GM10248 (cell line): ENCODE measurements at regions of chr5 and their contacts with region 1.

Region 1: DNA sequence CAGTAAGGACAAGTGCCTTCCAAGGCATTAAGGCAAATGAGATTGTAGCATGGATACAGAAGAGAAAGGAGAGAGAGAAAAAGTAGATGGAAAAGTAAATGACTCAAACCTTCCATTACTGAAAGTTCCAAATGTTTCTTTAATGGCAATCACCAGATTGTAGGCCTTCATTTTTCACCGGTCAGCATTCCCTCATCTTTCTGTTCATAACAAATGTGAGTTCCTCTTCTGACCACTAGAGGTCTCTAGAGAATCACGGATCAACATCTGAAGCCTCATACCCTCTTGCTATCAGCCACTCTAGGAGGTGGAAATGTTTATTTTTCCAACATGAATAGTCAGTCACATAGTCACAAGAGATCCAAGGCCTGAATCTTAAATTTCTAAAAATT is 73.6 kb upstream of the RPS23 start:
- DNase-seq: peak; percentile 53
- CTCF ChIP-seq: peak; percentile 64

Region 2: GRCh38 chr5:82158755-82159413 is 192.9 kb before region 1 on chr5:
- CTCF ChIA-PET with region 1: no interaction called
- POLR2A ChIA-PET with region 1: no interaction called
- DNase-seq: no peak
- CTCF ChIP-seq: no peak

Region 3: GRCh38 chr5:82185851-82186250 is 165.9 kb before region 1 on chr5:
- CTCF ChIA-PET with region 1: no interaction called
- POLR2A ChIA-PET with region 1: no interaction called
- DNase-seq: no peak
- CTCF ChIP-seq: no peak

Region 4: DNA sequence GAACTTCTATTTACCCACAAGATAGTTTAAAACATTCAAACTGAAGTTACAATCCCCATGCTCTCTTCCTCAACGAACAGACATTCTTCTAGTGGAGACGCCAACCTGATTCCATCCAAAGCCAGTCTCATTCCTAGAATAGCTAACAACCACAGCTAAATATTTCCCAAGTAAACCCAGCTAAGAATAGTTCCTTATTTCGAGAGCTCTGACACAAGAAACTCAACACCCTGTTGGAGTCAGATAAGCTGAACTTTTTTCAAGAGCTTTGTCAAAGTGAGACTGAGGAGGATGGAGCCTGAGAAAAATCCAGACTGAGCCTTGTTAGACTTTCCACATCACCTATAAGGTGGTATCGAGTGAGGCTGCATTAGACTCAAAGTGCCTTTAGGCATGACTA is 16.9 kb before region 1 on chr5:
- CTCF ChIA-PET with region 1: interaction called, 19 read pairs
- POLR2A ChIA-PET with region 1: no interaction called
- DNase-seq: no peak
- CTCF ChIP-seq: no peak

Region 5: DNA sequence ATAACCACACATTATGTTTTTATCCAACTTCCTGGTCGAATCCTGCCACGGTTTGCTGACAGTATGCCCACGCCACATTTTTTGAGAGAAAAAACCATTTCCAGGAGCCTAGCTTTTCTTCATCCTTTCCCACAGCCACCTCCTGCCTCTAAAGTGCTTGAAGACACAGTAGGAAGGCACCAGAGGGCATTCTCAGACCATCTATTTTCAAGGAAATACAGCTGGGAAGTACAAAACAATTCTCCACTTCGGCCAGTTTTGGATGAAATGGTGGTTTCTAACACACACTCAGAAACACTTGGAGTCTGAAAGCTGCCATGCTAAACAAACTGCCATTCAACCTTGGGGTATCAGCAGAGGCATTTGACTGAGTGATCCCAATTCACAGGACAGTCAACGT is 12.7 kb after region 1 on chr5:
- CTCF ChIA-PET with region 1: interaction called, 64 read pairs
- POLR2A ChIA-PET with region 1: no interaction called
- DNase-seq: no peak
- CTCF ChIP-seq: peak; percentile 12

Region 6: DNA sequence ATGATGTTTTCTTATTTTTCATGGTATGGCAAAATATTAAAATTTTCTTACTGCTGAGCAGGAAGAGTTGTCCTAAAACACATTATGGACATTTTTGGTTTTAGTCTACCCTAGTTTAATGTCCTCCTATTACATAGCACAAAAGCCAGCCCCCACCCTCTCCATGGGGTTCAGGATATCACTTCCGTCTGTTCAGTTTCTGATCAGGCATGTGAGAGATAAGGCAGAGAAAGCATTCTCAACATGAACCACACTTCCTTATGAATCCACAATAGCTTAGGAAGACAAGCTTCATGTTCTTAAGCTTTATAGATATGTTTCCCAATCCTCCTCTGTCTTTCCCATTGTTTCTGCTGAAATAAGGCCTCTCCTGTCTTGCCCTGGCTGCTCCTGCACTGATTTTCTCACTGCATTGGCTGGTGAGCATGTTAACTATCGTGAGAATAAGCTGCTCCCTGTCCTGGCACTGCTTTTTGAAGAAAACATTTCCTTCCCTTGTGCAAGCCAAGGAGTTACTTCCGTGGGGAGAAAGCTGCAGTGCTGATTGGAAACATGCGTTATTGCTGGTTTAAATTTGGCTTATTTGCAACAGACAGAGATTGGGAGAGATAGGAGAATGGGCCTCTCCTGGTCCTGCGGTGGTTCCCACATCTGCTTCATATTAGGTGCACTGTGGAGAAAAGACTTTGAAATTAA is 186.7 kb after region 1 on chr5:
- CTCF ChIA-PET with region 1: no interaction called
- POLR2A ChIA-PET with region 1: no interaction called
- DNase-seq: no peak
- CTCF ChIP-seq: no peak